Heart left ventricle (tissue), 16 donors: ENCODE measurements at regions of chr5 and their contacts with region 1.

Region 1: DNA sequence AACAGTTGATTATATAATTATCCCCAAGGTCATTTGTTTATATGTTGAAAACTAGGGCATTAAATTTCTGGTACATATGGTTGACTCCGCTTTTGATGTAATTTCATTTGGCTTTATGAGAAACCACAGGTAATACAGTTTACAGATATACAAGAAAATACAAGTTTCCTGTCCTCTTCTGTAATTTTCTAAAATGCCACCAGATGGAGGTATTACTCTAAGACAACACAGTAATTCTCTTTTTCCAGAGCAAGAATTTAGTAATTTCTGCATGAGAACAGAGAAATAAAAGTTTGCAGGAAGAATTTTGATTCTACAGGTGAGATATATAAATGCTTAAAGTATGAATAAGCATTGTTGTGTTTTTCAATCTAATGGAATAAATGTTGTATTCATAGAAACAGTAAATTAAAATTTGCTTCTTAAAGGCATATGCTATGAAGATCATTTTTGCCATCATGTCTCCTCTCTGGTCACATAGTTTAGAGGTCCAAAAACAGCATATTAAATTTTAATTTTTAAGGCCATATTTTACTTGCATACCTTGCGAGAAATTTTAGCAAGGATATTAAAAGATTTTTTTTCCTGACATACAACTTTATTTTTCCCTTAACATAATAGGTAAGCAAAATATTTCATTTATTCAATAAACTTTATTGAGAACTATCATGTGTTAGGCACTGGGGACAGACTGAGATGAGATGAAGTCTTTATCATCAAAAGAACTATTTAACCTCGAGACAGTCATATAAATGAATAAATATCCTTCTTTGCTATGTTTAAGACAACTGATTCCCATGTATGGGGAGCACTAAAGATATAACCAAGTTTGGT is 22.7 kb downstream of the CHD1 start:
- DNase-seq: no peak
- ATAC-seq: peak in 1 of 4 donors; percentile 49
- H3K4me3 ChIP-seq: no peak overlapping the region
- H3K27ac ChIP-seq: no peak overlapping the region
- H3K4me1 ChIP-seq: peaks cover 0 to 34% (median 8%) of the 10 kb centered on the region in 12 donors
- H3K27me3 ChIP-seq: no peaks in the 10 kb centered on the region
- CTCF ChIP-seq: peak; percentile 65 to 85 (median 74)
- POLR2A ChIP-seq: no peak

Region 2: GRCh38 chr5:98928873-98929696 is 23.0 kb after region 1 on chr5 and contains the start of gene CHD1:
- intact Hi-C with region 1: loop called in 1 of 10 experiments (anchors 2 kb)
- DNase-seq: peak; percentile 96 to 98 (median 97)
- ATAC-seq: peak; percentile 91 to 94 (median 92)
- H3K4me3 ChIP-seq: peak within 1 kb of the TSS; percentile 70 to 98 (median 86)
- H3K27ac ChIP-seq: peak within 1 kb of the TSS; percentile 98 to 100 (median 100)
- H3K4me1 ChIP-seq: peaks cover 5 to 64% (median 37%) of the 10 kb centered on the region in 12 donors
- H3K27me3 ChIP-seq: no peaks in the 10 kb centered on the region
- CTCF ChIP-seq: peak in 1 of 12 donors; percentile 9
- POLR2A ChIP-seq: peak; percentile 81 to 91
- total RNA-seq, gene CHD1: 10.5 to 24.0 (median 13.8) TPM

Region 3: GRCh38 chr5:99032234-99033013 is 126.3 kb after region 1 on chr5:
- intact Hi-C with region 1: loop called (anchors 1 to 2 kb)
- DNase-seq: peak in 4 of 5 donors; percentile 43 to 64 (median 50)
- ATAC-seq: peak; percentile 73 to 92 (median 84)
- H3K4me3 ChIP-seq: peak overlapping the region in 9 of 12 donors; percentile 26 to 54 (median 41)
- H3K27ac ChIP-seq: peak overlapping the region in 11 of 12 donors; percentile 26 to 83 (median 63)
- H3K4me1 ChIP-seq: peaks cover 0 to 62% (median 6%) of the 10 kb centered on the region in 12 donors
- H3K27me3 ChIP-seq: no peaks in the 10 kb centered on the region
- CTCF ChIP-seq: peak; percentile 59 to 95 (median 82)
- POLR2A ChIP-seq: no peak

Region 4: DNA sequence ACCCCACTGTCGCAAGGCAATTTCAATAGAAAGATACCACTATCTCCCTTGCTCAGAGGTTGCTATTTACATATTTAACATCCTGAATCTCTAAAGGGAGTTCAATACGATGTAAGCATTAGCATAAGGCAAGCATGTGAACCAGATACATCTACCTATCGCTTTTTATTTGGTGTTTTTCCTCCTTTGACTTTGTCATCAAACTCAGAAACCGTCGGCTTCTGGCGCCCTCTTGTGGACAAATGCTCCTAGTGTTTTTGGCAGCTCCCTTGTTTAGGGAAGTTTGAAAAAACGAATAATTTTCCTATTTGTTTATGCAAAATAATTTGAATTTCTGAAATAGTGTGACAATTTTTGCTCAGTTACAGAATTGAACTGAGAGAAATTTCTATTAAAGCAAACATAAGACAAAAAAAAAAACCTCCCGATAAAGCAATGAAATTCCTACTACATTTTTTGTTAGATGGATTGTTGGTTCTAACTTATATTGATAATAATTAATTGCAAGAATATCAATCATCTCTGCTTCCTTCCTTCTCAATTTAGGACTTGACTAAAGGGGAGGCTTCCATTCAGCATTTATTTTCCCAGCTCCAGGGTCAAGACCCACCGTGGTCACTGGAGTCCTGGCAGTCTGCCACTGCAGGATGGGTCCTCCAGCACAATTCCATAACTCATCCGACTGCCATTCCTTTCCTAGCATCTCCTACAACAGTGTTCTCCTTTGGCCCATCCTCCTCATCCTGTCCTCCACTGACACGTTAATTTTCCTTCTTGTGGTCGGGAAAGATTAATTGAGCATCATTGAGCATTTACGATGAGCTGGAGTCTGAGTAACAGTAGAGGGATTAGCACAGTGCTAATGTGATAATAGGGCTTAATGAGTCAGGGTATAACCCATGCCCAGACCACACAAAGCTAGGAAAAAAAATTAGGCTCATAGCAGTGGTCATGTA is 154.5 kb after region 1 on chr5:
- intact Hi-C with region 1: loop called in 5 of 10 experiments (anchors 2 to 10 kb)
- DNase-seq: peak; percentile 51 to 84 (median 53)
- ATAC-seq: no peak
- H3K4me3 ChIP-seq: peak overlapping the region in 1 of 12 donors; percentile 5
- H3K27ac ChIP-seq: no peak overlapping the region
- H3K4me1 ChIP-seq: peaks cover 0 to 9% (median 0%) of the 10 kb centered on the region in 12 donors
- H3K27me3 ChIP-seq: no peaks in the 10 kb centered on the region
- CTCF ChIP-seq: peak; percentile 76 to 93 (median 86)
- POLR2A ChIP-seq: no peak

Region 5: GRCh38 chr5:99243111-99243510 is 337.0 kb after region 1 on chr5:
- intact Hi-C with region 1: no loop called
- DNase-seq: no peak
- ATAC-seq: no peak
- H3K4me3 ChIP-seq: no peak overlapping the region
- H3K27ac ChIP-seq: no peak overlapping the region
- H3K4me1 ChIP-seq: no peaks in the 10 kb centered on the region
- H3K27me3 ChIP-seq: peaks cover 0 to 3% (median 0%) of the 10 kb centered on the region in 9 donors
- CTCF ChIP-seq: no peak
- POLR2A ChIP-seq: no peak